Activated CD4-positive, alpha-beta T cell treated with anti-CD3 and anti-CD28 coated beads, Interleukin-2, amount 10 ng/mL, durations not matched to agents 24 days and 14 days (primary cell): ENCODE measurements at regions of chr1 and their contacts with region 1.

Region 1: GRCh38 chr1:31564134-31564989 is 12.0 kb upstream of the TINAGL1 start:
- DNase-seq: peak; percentile 87
- H3K4me3 Mint-ChIP-seq: no peak overlapping the region
- H3K27ac Mint-ChIP-seq: no peak overlapping the region
- H3K4me1 Mint-ChIP-seq: peaks cover 3% of the 10 kb centered on the region
- H3K27me3 Mint-ChIP-seq: peaks cover 10% of the 10 kb centered on the region

Region 2: GRCh38 chr1:31617917-31618660 is 53.7 kb after region 1 on chr1:
- intact Hi-C with region 1: loop called (anchors 1 kb)
- DNase-seq: peak; percentile 81
- H3K4me3 Mint-ChIP-seq: no peak overlapping the region
- H3K27ac Mint-ChIP-seq: no peak overlapping the region
- H3K4me1 Mint-ChIP-seq: peaks cover 2% of the 10 kb centered on the region
- H3K27me3 Mint-ChIP-seq: peaks cover 30% of the 10 kb centered on the region

Region 3: DNA sequence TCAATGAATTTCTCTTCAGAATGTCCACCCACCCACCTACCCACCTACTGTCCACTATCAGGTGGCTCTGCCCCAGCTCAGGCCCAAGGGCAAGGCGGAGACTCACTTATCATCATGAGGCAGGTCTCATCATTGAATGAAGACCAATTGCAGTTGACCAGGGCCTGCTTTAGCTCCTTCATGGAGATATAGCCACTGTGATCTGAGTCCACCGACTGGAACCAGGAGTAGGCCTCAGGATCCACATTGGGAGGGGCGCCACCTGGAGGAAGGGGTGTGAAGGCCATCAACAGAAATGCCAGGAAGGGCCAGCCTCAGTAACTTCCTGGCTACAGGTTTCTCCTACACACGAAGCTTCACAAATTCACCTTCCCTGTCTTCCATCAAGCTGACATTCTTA is 68.7 kb after region 1 on chr1:
- intact Hi-C with region 1: loop called (anchors 1 kb)
- DNase-seq: peak; percentile 75
- H3K4me3 Mint-ChIP-seq: no peak overlapping the region
- H3K27ac Mint-ChIP-seq: no peak overlapping the region
- H3K4me1 Mint-ChIP-seq: peaks cover 7% of the 10 kb centered on the region
- H3K27me3 Mint-ChIP-seq: no peaks in the 10 kb centered on the region

Region 4: DNA sequence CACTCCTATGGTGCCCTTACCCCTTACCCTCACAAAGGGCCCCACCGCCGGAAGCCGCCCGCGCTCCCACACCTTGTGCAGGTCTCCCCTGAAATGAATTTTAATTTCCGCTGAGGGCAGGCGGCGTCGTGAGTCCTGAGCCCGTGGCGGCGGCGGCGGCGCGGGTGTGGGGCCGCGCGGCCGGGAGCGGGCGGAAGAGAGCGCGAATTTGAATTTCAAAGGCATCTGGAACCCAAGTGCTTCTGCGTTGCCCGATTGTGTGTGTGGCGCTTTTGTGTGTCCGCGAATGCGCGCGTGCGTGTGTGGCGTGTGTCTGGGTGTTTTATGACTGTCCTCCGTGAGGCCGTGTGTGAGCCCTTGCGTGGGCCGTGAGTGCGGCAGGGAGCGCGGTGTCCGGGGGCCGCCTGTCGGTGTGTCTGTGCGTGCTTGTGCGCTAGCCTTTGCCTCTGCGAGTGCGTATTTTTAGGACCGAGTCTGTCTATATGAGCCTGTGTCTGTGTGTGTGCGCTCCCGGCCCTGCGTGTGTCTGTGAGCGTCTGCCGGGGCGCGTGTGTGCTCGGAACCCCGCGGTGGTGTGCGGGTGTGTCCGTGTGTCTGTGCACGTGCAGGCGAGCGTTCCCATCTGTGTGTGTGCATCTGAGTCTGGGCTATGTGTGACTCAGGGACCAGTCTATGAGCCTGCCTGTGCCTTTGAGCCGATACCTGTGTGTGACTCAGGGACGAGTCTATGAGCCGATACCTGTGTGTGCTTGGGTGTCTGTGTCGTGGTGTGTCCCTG is 207.7 kb after region 1 on chr1:
- intact Hi-C with region 1: no loop called
- DNase-seq: peak; percentile 68
- H3K4me3 Mint-ChIP-seq: peak overlapping the region; percentile 86
- H3K27ac Mint-ChIP-seq: peak overlapping the region; percentile 75
- H3K4me1 Mint-ChIP-seq: peaks cover 37% of the 10 kb centered on the region
- H3K27me3 Mint-ChIP-seq: peaks cover 71% of the 10 kb centered on the region

Region 5: GRCh38 chr1:31834501-31834900 is 270.1 kb after region 1 on chr1:
- intact Hi-C with region 1: no loop called
- DNase-seq: no peak
- H3K4me3 Mint-ChIP-seq: no peak overlapping the region
- H3K27ac Mint-ChIP-seq: no peak overlapping the region
- H3K4me1 Mint-ChIP-seq: peaks cover 21% of the 10 kb centered on the region
- H3K27me3 Mint-ChIP-seq: peaks cover 3% of the 10 kb centered on the region

Region 6: GRCh38 chr1:32138943-32139342 is 574.6 kb after region 1 on chr1:
- intact Hi-C with region 1: no loop called
- DNase-seq: no peak
- H3K4me3 Mint-ChIP-seq: no peak overlapping the region
- H3K27ac Mint-ChIP-seq: no peak overlapping the region
- H3K4me1 Mint-ChIP-seq: peaks cover 25% of the 10 kb centered on the region
- H3K27me3 Mint-ChIP-seq: no peaks in the 10 kb centered on the region